ENCODE measurements at regions of chr17 and their contacts with region 1.

Region 1: GRCh38 chr17:31216053-31216751 is 80.8 kb downstream of the OMG start:
- DNase-seq: peak in 5 of 9 donors; percentile 28 to 40 (median 32)
- ATAC-seq: no peak
- H3K4me3 ChIP-seq: no peak overlapping the region
- H3K4me3 Mint-ChIP-seq: no peak overlapping the region
- H3K27ac ChIP-seq: no peak overlapping the region
- H3K27ac Mint-ChIP-seq: no peak overlapping the region
- H3K4me1 ChIP-seq: no peaks in the 10 kb centered on the region
- H3K4me1 Mint-ChIP-seq: peaks cover 0 to 4% (median 0%) of the 10 kb centered on the region in 7 donors
- H3K27me3 ChIP-seq: no peaks in the 10 kb centered on the region
- H3K27me3 Mint-ChIP-seq: no peaks in the 10 kb centered on the region

Region 2: GRCh38 chr17:30808785-30809286 is 407.4 kb before region 1 on chr17:
- CTCF ChIA-PET with region 1: no interaction called
- POLR2A ChIA-PET with region 1: no interaction called
- intact Hi-C with region 1: loop called in 1 of 2 experiments (anchors 1 kb)
- DNase-seq: peak in 7 of 9 donors; percentile 69 to 89 (median 83)
- ATAC-seq: peak; percentile 95
- H3K4me3 ChIP-seq: peak overlapping the region; percentile 38
- H3K4me3 Mint-ChIP-seq: peak overlapping the region; percentile 84 to 94 (median 88)
- H3K27ac ChIP-seq: peak overlapping the region; percentile 81
- H3K27ac Mint-ChIP-seq: peak overlapping the region; percentile 96 to 99 (median 97)
- H3K4me1 ChIP-seq: peaks cover 41 to 63% of the 10 kb centered on the region in 2 donors
- H3K4me1 Mint-ChIP-seq: peaks cover 52 to 84% (median 72%) of the 10 kb centered on the region in 7 donors
- H3K27me3 ChIP-seq: no peaks in the 10 kb centered on the region
- H3K27me3 Mint-ChIP-seq: no peaks in the 10 kb centered on the region

Region 3: GRCh38 chr17:30906101-30906911 is 309.9 kb before region 1 on chr17 and contains the start of gene TEFM:
- CTCF ChIA-PET with region 1: no interaction called
- POLR2A ChIA-PET with region 1: no interaction called
- intact Hi-C with region 1: loop called in 1 of 2 experiments (anchors 5 kb)
- DNase-seq: peak; percentile 71 to 86 (median 80)
- ATAC-seq: peak; percentile 98
- H3K4me3 ChIP-seq: peak within 1 kb of the TSS; percentile 96
- H3K4me3 Mint-ChIP-seq: peak within 1 kb of the TSS; percentile 88 to 99 (median 92)
- H3K27ac ChIP-seq: peak within 1 kb of the TSS; percentile 88
- H3K27ac Mint-ChIP-seq: peak within 1 kb of the TSS; percentile 77 to 99 (median 92)
- H3K4me1 ChIP-seq: peaks cover 9 to 13% of the 10 kb centered on the region in 2 donors
- H3K4me1 Mint-ChIP-seq: peaks cover 33 to 65% (median 56%) of the 10 kb centered on the region in 7 donors
- H3K27me3 ChIP-seq: no peaks in the 10 kb centered on the region
- H3K27me3 Mint-ChIP-seq: no peaks in the 10 kb centered on the region
- total RNA-seq, gene TEFM: 8.5 to 22.1 (median 16.5) TPM

Region 4: GRCh38 chr17:31008374-31009041 is 207.7 kb before region 1 on chr17:
- CTCF ChIA-PET with region 1: interaction called, 14 read pairs
- POLR2A ChIA-PET with region 1: interaction called, 3 read pairs
- intact Hi-C with region 1: loop called (anchors 1 kb)
- DNase-seq: peak; percentile 16 to 60 (median 40)
- ATAC-seq: peak; percentile 77
- H3K4me3 ChIP-seq: peak overlapping the region; percentile 75
- H3K4me3 Mint-ChIP-seq: peak overlapping the region; percentile 86 to 97 (median 92)
- H3K27ac ChIP-seq: peak overlapping the region; percentile 61
- H3K27ac Mint-ChIP-seq: peak overlapping the region; percentile 21 to 94 (median 88)
- H3K4me1 ChIP-seq: peaks cover 0 to 9% of the 10 kb centered on the region in 2 donors
- H3K4me1 Mint-ChIP-seq: peaks cover 8 to 23% (median 18%) of the 10 kb centered on the region in 7 donors
- H3K27me3 ChIP-seq: no peaks in the 10 kb centered on the region
- H3K27me3 Mint-ChIP-seq: peaks cover 0 to 31% (median 0%) of the 10 kb centered on the region in 5 donors

Region 5: DNA sequence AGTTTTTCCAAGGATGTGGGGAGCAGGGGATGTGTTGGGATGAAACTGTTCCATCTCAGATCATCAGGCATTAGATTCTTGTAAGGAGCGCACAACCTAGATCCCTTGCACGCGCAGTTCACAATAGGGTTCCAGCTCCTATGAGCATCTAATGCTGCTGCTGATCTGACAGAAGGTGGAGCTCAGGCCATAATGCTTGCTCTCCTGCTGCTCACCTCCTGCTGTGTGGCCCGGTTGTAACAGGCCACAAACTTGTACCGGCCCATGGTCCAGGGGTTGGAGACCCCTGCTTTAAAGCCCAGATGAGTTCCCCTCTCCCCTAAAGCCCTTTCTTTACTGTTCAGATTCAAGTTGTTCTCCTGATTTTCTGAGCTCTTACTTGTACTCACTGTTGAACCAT is 200.6 kb before region 1 on chr17:
- CTCF ChIA-PET with region 1: interaction called, 14 read pairs
- POLR2A ChIA-PET with region 1: interaction called, 3 read pairs
- intact Hi-C with region 1: loop called (anchors 1 kb)
- DNase-seq: no peak
- ATAC-seq: no peak
- H3K4me3 ChIP-seq: no peak overlapping the region
- H3K4me3 Mint-ChIP-seq: no peak overlapping the region
- H3K27ac ChIP-seq: no peak overlapping the region
- H3K27ac Mint-ChIP-seq: no peak overlapping the region
- H3K4me1 ChIP-seq: no peaks in the 10 kb centered on the region
- H3K4me1 Mint-ChIP-seq: peaks cover 0 to 5% (median 0%) of the 10 kb centered on the region in 7 donors
- H3K27me3 ChIP-seq: no peaks in the 10 kb centered on the region
- H3K27me3 Mint-ChIP-seq: peaks cover 0 to 16% (median 0%) of the 10 kb centered on the region in 5 donors

Region 6: DNA sequence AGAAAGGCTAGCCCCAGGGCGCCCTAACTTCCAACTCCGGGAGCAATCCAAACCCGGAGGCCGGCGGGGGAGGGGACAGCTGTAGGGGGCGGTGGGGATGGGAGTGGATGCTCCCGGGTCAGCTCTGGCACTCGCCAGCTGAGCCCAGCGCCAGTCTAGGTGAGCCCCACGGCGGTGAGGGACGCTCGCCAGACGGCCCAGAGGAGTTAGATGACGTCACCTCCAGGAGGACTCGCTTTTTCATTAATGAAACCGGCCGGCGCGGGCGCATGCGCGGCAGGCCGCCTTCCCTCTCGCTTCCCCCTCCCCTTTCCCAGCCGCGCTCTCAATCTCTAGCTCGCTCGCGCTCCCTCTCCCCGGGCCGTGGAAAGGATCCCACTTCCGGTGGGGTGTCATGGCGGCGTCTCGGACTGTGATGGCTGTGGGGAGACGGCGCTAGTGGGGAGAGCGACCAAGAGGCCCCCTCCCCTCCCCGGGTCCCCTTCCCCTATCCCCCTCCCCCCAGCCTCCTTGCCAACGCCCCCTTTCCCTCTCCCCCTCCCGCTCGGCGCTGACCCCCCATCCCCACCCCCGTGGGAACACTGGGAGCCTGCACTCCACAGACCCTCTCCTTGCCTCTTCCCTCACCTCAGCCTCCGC is 121.5 kb before region 1 on chr17 and contains the start of gene NF1:
- CTCF ChIA-PET with region 1: interaction called, 4 read pairs
- POLR2A ChIA-PET with region 1: no interaction called
- intact Hi-C with region 1: loop called in 1 of 2 experiments (anchors 10 kb)
- DNase-seq: peak; percentile 57 to 86 (median 72)
- ATAC-seq: peak; percentile 88
- H3K4me3 ChIP-seq: peak within 1 kb of the TSS; percentile 71
- H3K4me3 Mint-ChIP-seq: peak within 1 kb of the TSS; percentile 83 to 98 (median 94)
- H3K27ac ChIP-seq: peak within 1 kb of the TSS; percentile 76
- H3K27ac Mint-ChIP-seq: peak within 1 kb of the TSS; percentile 80 to 97 (median 92)
- H3K4me1 ChIP-seq: peaks cover 0 to 8% of the 10 kb centered on the region in 2 donors
- H3K4me1 Mint-ChIP-seq: peaks cover 10 to 22% (median 13%) of the 10 kb centered on the region in 7 donors
- H3K27me3 ChIP-seq: no peaks in the 10 kb centered on the region
- H3K27me3 Mint-ChIP-seq: no peaks in the 10 kb centered on the region
- total RNA-seq, gene NF1: 18.8 to 32.4 (median 21.2) TPM

Region 7: GRCh38 chr17:31274252-31274651 is 58.0 kb after region 1 on chr17:
- CTCF ChIA-PET with region 1: no interaction called
- POLR2A ChIA-PET with region 1: no interaction called
- intact Hi-C with region 1: no loop called
- DNase-seq: no peak
- ATAC-seq: peak; percentile 44
- H3K4me3 ChIP-seq: no peak overlapping the region
- H3K4me3 Mint-ChIP-seq: no peak overlapping the region
- H3K27ac ChIP-seq: no peak overlapping the region
- H3K27ac Mint-ChIP-seq: no peak overlapping the region
- H3K4me1 ChIP-seq: no peaks in the 10 kb centered on the region
- H3K4me1 Mint-ChIP-seq: peaks cover 0 to 3% (median 0%) of the 10 kb centered on the region in 7 donors
- H3K27me3 ChIP-seq: no peaks in the 10 kb centered on the region
- H3K27me3 Mint-ChIP-seq: no peaks in the 10 kb centered on the region

Region 8: GRCh38 chr17:31373150-31374093 is 157.2 kb after region 1 on chr17:
- CTCF ChIA-PET with region 1: interaction called, 14 read pairs
- POLR2A ChIA-PET with region 1: no interaction called
- intact Hi-C with region 1: loop called (anchors 1 to 2 kb)
- DNase-seq: peak in 7 of 9 donors; percentile 51 to 73 (median 65)
- ATAC-seq: peak; percentile 90
- H3K4me3 ChIP-seq: no peak overlapping the region
- H3K4me3 Mint-ChIP-seq: no peak overlapping the region
- H3K27ac ChIP-seq: no peak overlapping the region
- H3K27ac Mint-ChIP-seq: peak overlapping the region in 3 of 9 donors; percentile 10 to 28 (median 26)
- H3K4me1 ChIP-seq: peaks cover 0 to 4% of the 10 kb centered on the region in 2 donors
- H3K4me1 Mint-ChIP-seq: peaks cover 17 to 30% (median 27%) of the 10 kb centered on the region in 7 donors
- H3K27me3 ChIP-seq: no peaks in the 10 kb centered on the region
- H3K27me3 Mint-ChIP-seq: no peaks in the 10 kb centered on the region